Sciatic nerve (tissue), 2 donors: ENCODE measurements at regions of chr6 and their contacts with region 1.

Region 1: GRCh38 chr6:110399219-110400071 is 15.9 kb downstream of the DDO start:
- DNase-seq: peak; percentile 65
- ATAC-seq: peak; percentile 79

Region 2: DNA sequence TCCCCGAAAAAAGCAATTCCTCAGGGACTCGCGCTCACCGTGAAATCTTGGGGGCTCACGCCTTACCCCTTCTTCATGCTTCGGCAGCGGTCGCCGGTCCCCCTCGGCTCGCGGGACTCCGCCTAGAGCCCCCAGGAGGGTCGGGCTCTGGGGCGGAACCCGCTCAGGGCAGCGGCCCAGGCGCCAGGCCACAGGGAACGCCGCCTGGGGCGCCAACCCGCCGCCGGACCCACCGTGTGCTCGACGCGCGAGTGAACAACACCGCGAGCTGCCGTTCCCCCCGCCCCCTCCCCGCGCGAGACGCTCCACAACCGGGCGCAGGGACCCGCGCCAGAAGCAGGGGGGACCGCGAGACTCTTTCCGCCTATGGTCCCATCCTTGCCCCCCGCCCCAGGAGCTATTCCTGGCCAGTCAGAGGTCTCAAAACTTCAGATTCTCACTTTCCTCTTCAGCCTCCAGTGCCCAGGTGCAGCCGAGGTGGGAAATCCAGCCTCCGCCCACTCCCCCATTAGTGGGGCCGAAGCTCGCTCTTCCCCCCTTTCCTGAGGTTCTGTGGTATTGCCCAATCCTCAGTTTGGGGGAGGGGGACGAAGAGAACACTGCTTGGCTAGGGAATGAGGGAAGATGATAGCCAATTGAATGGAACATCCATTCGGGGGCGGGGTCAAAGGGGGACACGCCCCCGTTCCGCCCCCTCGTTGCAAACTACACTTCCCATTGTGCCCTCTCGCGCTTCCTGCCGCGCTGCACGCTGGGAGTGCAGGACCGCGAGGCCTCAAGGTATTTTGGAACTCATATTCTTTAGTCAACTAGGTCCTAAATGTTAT is 219.8 kb before region 1 on chr6 and contains the start of gene WASF1:
- intact Hi-C with region 1: loop called (anchors 10 kb)
- DNase-seq: peak; percentile 95
- ATAC-seq: peak; percentile 99
- total RNA-seq, gene WASF1: 9.6 TPM